ENCODE measurements at regions of chrX and their contacts with region 1.

Region 1: GRCh38 chrX:118974088-118974907 is at the start of gene LONRF3:
- DNase-seq: peak; percentile 70
- H3K4me3 Mint-ChIP-seq: peak within 1 kb of the TSS; percentile 79
- H3K27ac Mint-ChIP-seq: peak within 1 kb of the TSS; percentile 81
- H3K4me1 Mint-ChIP-seq: peaks cover 7% of the 10 kb centered on the region
- H3K27me3 Mint-ChIP-seq: peaks cover 5% of the 10 kb centered on the region
- total RNA-seq, gene LONRF3: 4.3 to 4.5 TPM

Region 2: GRCh38 chrX:119015407-119016237 is 41.3 kb after region 1 on chrX:
- CTCF ChIA-PET with region 1: no interaction called
- POLR2A ChIA-PET with region 1: no interaction called
- intact Hi-C with region 1: loop called (anchors 5 kb)
- DNase-seq: peak; percentile 73
- H3K4me3 Mint-ChIP-seq: no peak overlapping the region
- H3K27ac Mint-ChIP-seq: no peak overlapping the region
- H3K4me1 Mint-ChIP-seq: peaks cover 20% of the 10 kb centered on the region
- H3K27me3 Mint-ChIP-seq: no peaks in the 10 kb centered on the region

Region 3: GRCh38 chrX:119235872-119236622 is 261.7 kb after region 1 on chrX and contains the start of gene PGRMC1:
- CTCF ChIA-PET with region 1: no interaction called
- POLR2A ChIA-PET with region 1: no interaction called
- intact Hi-C with region 1: loop called (anchors 10 kb)
- DNase-seq: peak; percentile 83
- H3K4me3 Mint-ChIP-seq: peak within 1 kb of the TSS; percentile 80
- H3K27ac Mint-ChIP-seq: peak within 1 kb of the TSS; percentile 79
- H3K4me1 Mint-ChIP-seq: peaks cover 24% of the 10 kb centered on the region
- H3K27me3 Mint-ChIP-seq: peaks cover 2% of the 10 kb centered on the region
- total RNA-seq, gene PGRMC1: 29.0 to 29.4 TPM